T-cell (primary cell): ENCODE measurements at regions of chr19 and their contacts with region 1.

Region 1: GRCh38 chr19:10095948-10096621 is 6.4 kb downstream of the ANGPTL6 start:
- DNase-seq: peak; percentile 72 to 96 (median 85)
- ATAC-seq: peak; percentile 89 to 91 (median 89)
- H3K4me3 ChIP-seq: peak overlapping the region; percentile 23 to 41
- H3K4me3 Mint-ChIP-seq: peak overlapping the region; percentile 46 to 68 (median 59)
- H3K27ac ChIP-seq: peak overlapping the region; percentile 66
- H3K27ac Mint-ChIP-seq: peak overlapping the region; percentile 36 to 71
- H3K4me1 ChIP-seq: peaks cover 10 to 54% of the 10 kb centered on the region in 2 experiments
- H3K4me1 Mint-ChIP-seq: peaks cover 27 to 38% (median 30%) of the 10 kb centered on the region in 3 donors
- H3K27me3 ChIP-seq: no peaks in the 10 kb centered on the region
- H3K27me3 Mint-ChIP-seq: no peaks in the 10 kb centered on the region

Region 2: DNA sequence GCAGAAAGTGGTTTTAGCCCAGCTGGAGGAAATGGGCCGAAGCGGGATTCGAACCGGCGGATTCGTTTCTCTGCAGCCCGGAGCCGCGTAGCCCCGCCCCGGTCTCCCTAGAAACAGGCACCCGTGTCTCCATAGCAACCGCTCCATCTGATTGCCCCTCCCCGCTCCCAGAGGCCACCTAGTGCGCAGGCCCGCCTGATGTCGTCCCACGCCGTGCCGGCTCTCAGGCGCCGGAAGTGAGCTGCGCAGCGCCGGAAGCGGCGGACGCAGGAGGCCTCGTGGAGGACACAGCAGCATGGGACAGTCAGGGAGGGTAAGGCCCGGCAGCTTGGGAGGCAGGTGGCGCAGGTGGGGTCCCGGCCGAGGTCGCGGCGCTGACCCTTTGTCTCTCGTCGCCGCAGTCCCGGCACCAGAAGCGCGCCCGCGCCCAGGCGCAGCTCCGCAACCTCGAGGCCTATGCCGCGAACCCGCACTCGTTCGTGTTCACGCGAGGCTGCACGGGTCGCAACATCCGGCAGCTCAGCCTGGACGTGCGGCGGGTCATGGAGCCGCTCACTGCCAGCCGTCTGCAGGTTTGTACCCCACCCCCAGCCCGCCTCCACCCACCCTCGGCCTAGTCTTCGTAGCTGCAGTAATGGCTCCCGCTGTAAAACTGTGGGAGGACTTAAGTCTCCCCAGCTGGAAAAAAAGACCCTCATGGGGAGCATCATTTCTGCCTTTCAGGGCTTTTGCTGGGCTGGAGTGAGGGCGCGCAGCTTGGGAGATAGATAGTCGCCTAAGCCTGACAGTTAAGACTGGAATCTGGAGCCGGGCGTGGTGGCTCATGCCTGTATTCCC is 10.2 kb after region 1 on chr19 and contains the start of gene PPAN:
- CTCF ChIA-PET with region 1: interaction called, 4 to 16 read pairs
- POLR2A ChIA-PET with region 1: interaction called in 1 of 2 experiments, 19 read pairs
- DNase-seq: peak; percentile 91 to 100 (median 97)
- ATAC-seq: peak; percentile 71 to 79 (median 75)
- H3K4me3 ChIP-seq: peak within 1 kb of the TSS; percentile 62 to 73
- H3K4me3 Mint-ChIP-seq: peak within 1 kb of the TSS; percentile 80 to 91 (median 89)
- H3K27ac ChIP-seq: peak within 1 kb of the TSS; percentile 97
- H3K27ac Mint-ChIP-seq: peak within 1 kb of the TSS; percentile 94 to 96
- H3K4me1 ChIP-seq: peaks cover 32 to 92% of the 10 kb centered on the region in 2 experiments
- H3K4me1 Mint-ChIP-seq: peaks cover 60 to 61% (median 60%) of the 10 kb centered on the region in 3 donors
- H3K27me3 ChIP-seq: no peaks in the 10 kb centered on the region
- H3K27me3 Mint-ChIP-seq: no peaks in the 10 kb centered on the region
- total RNA-seq, gene PPAN: 89.3 to 140 (median 123) TPM

Region 3: DNA sequence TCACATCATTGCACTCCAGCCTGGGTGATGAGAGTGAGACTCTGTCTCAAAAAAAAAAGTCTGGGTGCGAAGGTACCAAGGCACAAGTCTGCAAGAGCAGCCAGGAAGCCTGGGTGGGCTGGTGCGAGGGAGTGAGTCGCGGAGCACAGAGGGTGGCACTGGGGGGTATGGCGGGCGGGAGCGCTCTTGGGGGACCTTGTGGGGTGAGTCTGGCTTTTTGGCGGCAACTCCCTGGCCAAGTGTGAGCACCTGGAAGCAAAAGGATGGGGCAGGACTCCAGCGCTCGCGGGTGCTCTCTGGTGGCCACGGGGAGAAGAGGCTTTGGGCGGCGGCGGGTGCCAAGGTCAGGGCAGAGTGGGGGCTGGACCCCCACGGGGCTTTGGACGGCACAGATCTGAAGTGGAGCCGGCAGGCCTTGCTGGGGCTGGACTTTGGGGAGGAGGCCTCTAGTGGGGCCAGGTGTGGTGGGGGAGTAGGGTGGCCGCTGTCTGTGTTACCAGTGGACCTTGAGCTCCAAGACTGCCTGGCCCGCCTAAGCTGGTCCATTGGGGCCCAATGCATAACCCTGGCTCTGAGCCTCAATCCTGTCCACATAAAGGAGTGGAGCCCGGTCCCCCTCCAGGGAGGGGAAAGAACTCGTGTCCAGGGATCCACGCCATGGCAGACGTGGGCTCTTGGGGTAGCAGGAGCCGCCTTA is 17.0 kb after region 1 on chr19:
- CTCF ChIA-PET with region 1: interaction called, 4 to 16 read pairs
- POLR2A ChIA-PET with region 1: interaction called in 1 of 2 experiments, 19 read pairs
- DNase-seq: peak; percentile 29 to 82 (median 58)
- ATAC-seq: peak; percentile 48 to 58 (median 56)
- H3K4me3 ChIP-seq: peak overlapping the region in 1 of 2 donors; percentile 24
- H3K4me3 Mint-ChIP-seq: peak overlapping the region; percentile 55 to 65 (median 61)
- H3K27ac ChIP-seq: peak overlapping the region; percentile 81
- H3K27ac Mint-ChIP-seq: peak overlapping the region; percentile 86 to 89
- H3K4me1 ChIP-seq: peaks cover 2 to 94% of the 10 kb centered on the region in 2 experiments
- H3K4me1 Mint-ChIP-seq: peaks cover 32 to 49% (median 43%) of the 10 kb centered on the region in 3 donors
- H3K27me3 ChIP-seq: no peaks in the 10 kb centered on the region
- H3K27me3 Mint-ChIP-seq: no peaks in the 10 kb centered on the region